Activated CD8-positive, alpha-beta memory T cell treated with anti-CD3 and anti-CD28 coated beads, Interleukin-2, amount 10 ng/mL, durations not matched to agents 7 days and 5 days (primary cell): ENCODE measurements at regions of chr17 and their contacts with region 1.

Region 1: GRCh38 chr17:40191237-40192208 is 14.3 kb downstream of the RAPGEFL1 start:
- DNase-seq: peak; percentile 80
- ATAC-seq: peak; percentile 91
- H3K4me3 Mint-ChIP-seq: peak overlapping the region; percentile 82
- H3K27ac Mint-ChIP-seq: no peak overlapping the region
- H3K4me1 Mint-ChIP-seq: peaks cover 17% of the 10 kb centered on the region
- H3K27me3 Mint-ChIP-seq: peaks cover 4% of the 10 kb centered on the region

Region 2: GRCh38 chr17:39939588-39940419 is 251.7 kb before region 1 on chr17:
- CTCF ChIA-PET with region 1: no interaction called
- DNase-seq: peak; percentile 72
- ATAC-seq: peak; percentile 87
- H3K4me3 Mint-ChIP-seq: no peak overlapping the region
- H3K27ac Mint-ChIP-seq: peak overlapping the region; percentile 37
- H3K4me1 Mint-ChIP-seq: peaks cover 19% of the 10 kb centered on the region
- H3K27me3 Mint-ChIP-seq: no peaks in the 10 kb centered on the region

Region 3: DNA sequence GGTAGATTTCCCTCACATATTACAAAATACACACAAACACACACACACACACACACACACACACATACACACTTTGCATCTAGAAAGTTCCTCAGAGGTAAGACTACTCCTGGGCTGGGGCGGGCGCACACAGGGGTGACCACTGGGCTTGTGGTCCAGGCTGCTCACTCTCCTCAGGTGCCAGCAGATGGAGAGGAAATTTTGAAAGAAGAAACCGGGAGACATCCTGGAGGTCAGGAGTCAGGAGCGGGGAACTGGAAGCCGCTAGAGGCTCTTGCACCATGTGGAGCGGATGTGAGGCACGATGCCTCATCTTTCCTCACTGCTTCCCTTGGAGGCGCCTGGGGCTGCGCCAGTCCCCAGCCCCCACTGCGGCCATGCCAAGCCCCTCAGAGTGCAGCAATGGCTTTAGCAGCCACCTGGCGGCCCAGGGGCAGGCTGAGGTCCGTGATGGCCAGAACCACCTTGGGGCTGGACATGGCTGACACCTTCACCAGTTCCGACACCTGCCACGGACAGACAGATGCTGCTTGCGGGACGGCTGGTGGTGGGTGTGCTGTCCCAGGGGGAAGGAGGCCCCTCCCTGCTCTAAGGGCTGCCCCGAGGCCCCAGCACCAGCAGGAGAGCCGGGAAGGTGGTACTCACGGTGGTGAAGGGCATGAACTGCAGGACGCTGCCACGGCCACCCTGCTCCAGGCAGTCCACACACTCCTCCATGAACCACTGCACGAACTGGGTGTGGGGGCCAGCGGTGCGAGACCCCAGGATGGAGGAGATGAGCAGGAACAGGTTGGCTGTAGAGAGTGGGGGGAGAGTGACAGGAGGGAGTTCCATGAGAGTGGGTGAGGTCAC is 172.2 kb before region 1 on chr17:
- CTCF ChIA-PET with region 1: interaction called, 21 read pairs
- DNase-seq: no peak
- ATAC-seq: no peak
- H3K4me3 Mint-ChIP-seq: no peak overlapping the region
- H3K27ac Mint-ChIP-seq: no peak overlapping the region
- H3K4me1 Mint-ChIP-seq: no peaks in the 10 kb centered on the region
- H3K27me3 Mint-ChIP-seq: no peaks in the 10 kb centered on the region

Region 4: DNA sequence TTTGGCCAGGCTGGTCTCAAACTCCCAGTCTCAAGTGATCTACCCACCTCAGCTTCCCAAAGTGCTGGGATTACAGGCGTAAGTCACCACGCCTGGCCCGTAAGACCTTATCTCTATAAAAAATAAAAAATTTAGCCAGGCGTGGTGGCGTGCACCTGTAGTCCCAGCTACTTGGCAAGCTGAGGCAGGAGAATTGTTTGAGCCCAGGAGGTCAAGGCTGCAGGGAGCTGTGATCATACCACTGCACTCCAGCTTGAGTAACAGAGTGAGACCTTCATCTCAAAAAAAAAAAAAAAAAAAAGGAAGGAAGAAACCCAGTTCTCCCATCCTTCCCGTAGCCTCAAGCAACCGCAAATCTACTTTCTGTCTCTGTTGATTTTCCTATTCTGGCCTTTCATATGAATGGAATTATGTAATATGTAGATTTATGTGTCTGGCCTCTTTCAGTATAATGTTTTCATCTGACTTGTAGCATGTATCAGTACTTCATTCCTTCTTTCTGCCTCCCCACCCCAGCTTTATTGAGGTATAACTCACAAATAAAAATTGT is 40.0 kb before region 1 on chr17:
- CTCF ChIA-PET with region 1: interaction called, 10 read pairs
- DNase-seq: no peak
- ATAC-seq: no peak
- H3K4me3 Mint-ChIP-seq: no peak overlapping the region
- H3K27ac Mint-ChIP-seq: no peak overlapping the region
- H3K4me1 Mint-ChIP-seq: peaks cover 33% of the 10 kb centered on the region
- H3K27me3 Mint-ChIP-seq: no peaks in the 10 kb centered on the region

Region 5: GRCh38 chr17:40168262-40168832 is 23.2 kb before region 1 on chr17:
- CTCF ChIA-PET with region 1: interaction called, 26 read pairs
- DNase-seq: peak; percentile 56
- ATAC-seq: peak; percentile 58
- H3K4me3 Mint-ChIP-seq: no peak overlapping the region
- H3K27ac Mint-ChIP-seq: peak overlapping the region; percentile 53
- H3K4me1 Mint-ChIP-seq: peaks cover 3% of the 10 kb centered on the region
- H3K27me3 Mint-ChIP-seq: no peaks in the 10 kb centered on the region

Region 6: DNA sequence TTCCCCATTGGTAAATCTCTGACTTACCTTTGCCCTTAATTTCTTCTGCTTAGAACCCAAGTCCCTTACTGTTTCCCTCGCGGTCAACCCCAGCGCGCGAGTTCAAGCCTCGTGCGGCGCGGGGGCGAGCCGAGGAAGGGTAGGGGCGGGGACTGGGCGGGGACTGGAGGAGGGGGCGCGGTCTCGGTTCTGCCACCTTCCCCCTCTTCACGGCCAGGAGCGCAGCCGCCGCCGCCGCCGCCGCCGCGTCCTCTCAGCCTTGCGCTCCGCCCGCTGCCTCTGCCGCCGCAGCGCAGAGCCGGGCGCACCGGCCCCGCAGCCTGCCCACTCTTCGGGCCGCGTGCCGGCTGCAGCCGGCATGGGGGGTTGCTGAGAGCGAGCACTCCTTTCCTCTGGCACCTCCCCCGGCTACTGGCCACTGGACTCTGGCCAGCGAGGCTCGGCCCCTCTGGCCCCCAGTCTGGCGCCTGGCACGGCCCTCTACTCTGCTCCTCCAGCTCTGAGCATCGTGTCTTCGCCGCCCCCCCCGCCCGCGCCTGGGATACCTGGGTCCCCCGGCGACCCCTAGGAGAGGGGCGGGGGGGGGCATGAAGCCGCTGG is 14.1 kb before region 1 on chr17 and contains the start of gene RAPGEFL1:
- CTCF ChIA-PET with region 1: interaction called, 12 read pairs
- DNase-seq: peak; percentile 87
- ATAC-seq: peak; percentile 96
- H3K4me3 Mint-ChIP-seq: no peak within 1 kb of the TSS
- H3K27ac Mint-ChIP-seq: peak within 1 kb of the TSS; percentile 43
- H3K4me1 Mint-ChIP-seq: peaks cover 7% of the 10 kb centered on the region
- H3K27me3 Mint-ChIP-seq: no peaks in the 10 kb centered on the region
- total RNA-seq, gene RAPGEFL1: 4.4 to 4.6 TPM

Region 7: DNA sequence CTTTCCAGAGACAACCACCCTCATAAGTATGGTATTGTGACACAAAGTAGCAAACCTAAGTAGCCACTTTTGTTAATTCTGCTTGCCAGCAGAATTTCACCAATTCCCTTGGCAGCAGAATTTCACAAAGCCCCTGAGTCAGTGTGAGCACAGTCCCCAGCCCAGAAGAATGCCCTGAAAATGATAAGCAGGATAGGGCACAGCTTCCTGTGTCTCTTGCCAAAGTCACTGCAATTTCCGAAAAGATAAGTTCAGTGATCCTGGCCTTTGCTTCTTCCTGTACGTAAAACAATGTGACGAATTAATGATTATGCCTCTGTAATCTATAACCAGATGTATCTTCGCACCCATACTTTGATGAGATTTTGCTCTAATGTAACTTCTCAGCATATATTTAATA is 11.6 kb after region 1 on chr17:
- CTCF ChIA-PET with region 1: interaction called, 21 read pairs
- DNase-seq: no peak
- ATAC-seq: no peak
- H3K4me3 Mint-ChIP-seq: no peak overlapping the region
- H3K27ac Mint-ChIP-seq: no peak overlapping the region
- H3K4me1 Mint-ChIP-seq: peaks cover 7% of the 10 kb centered on the region
- H3K27me3 Mint-ChIP-seq: peaks cover 6% of the 10 kb centered on the region